Sciatic nerve (tissue), 2 donors: ENCODE measurements at regions of chr6 and their contacts with region 1.

Region 1: GRCh38 chr6:72984981-72985665 is 240.2 kb downstream of the KHDC1L start:
- DNase-seq: no peak
- ATAC-seq: no peak

Region 2: GRCh38 chr6:72825315-72825911 is 159.7 kb before region 1 on chr6:
- intact Hi-C with region 1: loop called (anchors 10 kb)
- DNase-seq: no peak
- ATAC-seq: no peak

Region 3: DNA sequence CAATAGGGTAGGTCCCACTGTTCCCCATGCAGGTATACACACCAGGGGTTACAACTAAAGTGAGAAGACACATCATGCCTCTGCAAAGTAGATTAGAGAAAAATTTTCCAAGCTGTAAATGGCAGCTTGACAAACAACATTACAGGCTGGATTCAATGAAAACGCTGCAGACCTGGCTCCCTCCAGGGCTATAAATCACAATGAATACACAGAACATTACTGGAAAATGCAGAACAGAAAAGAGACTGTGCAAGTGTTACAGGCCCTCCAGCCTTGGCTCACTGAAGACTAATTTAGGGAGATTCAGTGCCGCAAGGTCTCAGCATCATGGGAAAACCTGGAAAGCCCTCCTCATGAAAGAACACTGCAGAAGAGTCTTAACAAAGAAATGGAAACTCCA is 32.4 kb after region 1 on chr6:
- intact Hi-C with region 1: no loop called
- DNase-seq: no peak
- ATAC-seq: no peak

Region 4: GRCh38 chr6:73058736-73059135 is 73.6 kb after region 1 on chr6:
- intact Hi-C with region 1: no loop called
- DNase-seq: no peak
- ATAC-seq: no peak

Region 5: DNA sequence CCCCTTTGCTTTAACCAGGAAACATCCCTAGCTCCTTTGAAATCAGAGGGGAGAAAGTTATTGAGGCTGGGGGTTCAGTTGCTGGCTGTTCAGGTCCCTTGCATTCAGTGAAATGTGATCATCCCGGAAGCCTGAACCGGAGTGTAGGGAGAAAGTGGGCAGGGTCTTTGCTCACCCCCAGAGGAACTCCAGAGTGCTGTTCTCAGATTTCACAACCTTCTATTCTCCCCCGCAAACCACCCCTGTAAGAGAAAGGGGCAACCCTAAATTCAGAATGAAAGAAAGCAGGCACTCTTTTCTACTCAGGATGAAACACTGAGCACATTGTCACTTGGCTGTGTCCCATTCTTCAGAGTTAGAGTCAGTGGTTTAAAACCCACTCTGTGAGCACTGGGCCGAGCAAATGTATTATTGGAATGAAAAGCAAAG is 100.3 kb after region 1 on chr6:
- intact Hi-C with region 1: no loop called
- DNase-seq: no peak
- ATAC-seq: no peak